ENCODE measurements at regions of chr11 and their contacts with region 1.

Region 1: GRCh38 chr11:101860696-101861427 is 53.9 kb upstream of the CEP126 start:
- DNase-seq: peak in 19 of 35 experiments; percentile 0 to 44 (median 3)
- ATAC-seq: peak in 2 of 4 experiments; percentile 51 to 55
- H3K4me3 ChIP-seq: no peak overlapping the region
- H3K4me3 Mint-ChIP-seq: no peak overlapping the region
- H3K27ac ChIP-seq: no peak overlapping the region
- H3K27ac Mint-ChIP-seq: no peak overlapping the region
- H3K4me1 ChIP-seq: no peaks in the 10 kb centered on the region
- H3K4me1 Mint-ChIP-seq: no peaks in the 10 kb centered on the region
- H3K27me3 ChIP-seq: peaks cover 0 to 3% of the 10 kb centered on the region in 2 experiments
- H3K27me3 Mint-ChIP-seq: peaks cover 15 to 17% of the 10 kb centered on the region in 2 donors

Region 2: DNA sequence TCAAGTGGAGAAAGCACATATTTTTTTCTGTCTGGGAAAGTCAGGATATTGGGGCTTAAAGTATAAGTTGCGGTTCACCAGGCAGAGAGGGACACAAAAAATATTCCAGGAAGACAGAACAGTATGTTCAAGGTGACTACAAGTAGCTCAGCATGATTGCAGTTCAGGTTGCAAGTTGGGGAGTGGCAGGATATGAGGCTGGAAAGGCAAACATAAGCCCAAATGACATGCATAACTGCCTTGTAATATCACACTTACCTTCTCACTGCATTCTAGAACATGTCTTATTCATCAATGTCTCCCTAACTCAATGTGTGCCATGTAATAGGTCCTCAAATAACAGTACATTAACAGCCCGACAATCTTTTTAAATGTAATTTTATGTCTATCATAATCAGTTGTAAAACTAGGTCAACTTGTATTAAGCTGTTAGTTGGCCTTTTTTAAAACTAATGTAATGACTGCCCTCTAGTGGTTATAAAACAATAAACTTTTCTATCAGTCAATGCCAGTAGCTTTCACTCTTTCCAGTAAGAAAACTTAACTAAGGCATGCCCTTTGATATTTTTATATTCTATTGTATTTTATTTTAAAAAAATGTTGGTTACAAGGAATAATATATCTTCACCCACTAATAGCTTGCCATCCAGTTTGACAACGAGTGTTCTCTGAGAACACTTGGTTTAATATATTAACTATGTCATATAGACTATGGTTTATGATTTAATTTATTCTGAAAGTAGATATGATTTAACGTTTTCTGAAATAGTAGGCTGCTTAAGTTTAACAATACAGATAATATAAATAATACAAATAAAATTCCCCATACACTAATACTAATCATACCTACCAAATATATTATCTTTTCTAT is 146.9 kb after region 1 on chr11:
- CTCF ChIA-PET with region 1: interaction called, 66 to 92 read pairs
- POLR2A ChIA-PET with region 1: interaction called in 1 of 2 experiments, 3 read pairs
- DNase-seq: peak in 1 of 35 experiments; percentile 42
- ATAC-seq: no peak
- H3K4me3 ChIP-seq: no peak overlapping the region
- H3K4me3 Mint-ChIP-seq: no peak overlapping the region
- H3K27ac ChIP-seq: no peak overlapping the region
- H3K27ac Mint-ChIP-seq: no peak overlapping the region
- H3K4me1 ChIP-seq: no peaks in the 10 kb centered on the region
- H3K4me1 Mint-ChIP-seq: peaks cover 3 to 6% (median 4%) of the 10 kb centered on the region in 3 donors
- H3K27me3 ChIP-seq: peaks cover 0 to 10% of the 10 kb centered on the region in 2 experiments
- H3K27me3 Mint-ChIP-seq: peaks cover 10 to 15% of the 10 kb centered on the region in 2 donors

Region 3: GRCh38 chr11:102047305-102047924 is 186.6 kb after region 1 on chr11 and contains the start of gene CFAP300:
- CTCF ChIA-PET with region 1: no interaction called
- POLR2A ChIA-PET with region 1: no interaction called
- DNase-seq: peak in 25 of 35 experiments; percentile 1 to 27 (median 7)
- ATAC-seq: peak; percentile 37 to 53 (median 50)
- H3K4me3 ChIP-seq: peak within 1 kb of the TSS; percentile 13 to 54
- H3K4me3 Mint-ChIP-seq: peak within 1 kb of the TSS; percentile 49 to 69 (median 54)
- H3K27ac ChIP-seq: no peak within 1 kb of the TSS
- H3K27ac Mint-ChIP-seq: no peak within 1 kb of the TSS
- H3K4me1 ChIP-seq: peaks cover 0 to 7% of the 10 kb centered on the region in 2 experiments
- H3K4me1 Mint-ChIP-seq: peaks cover 6 to 9% (median 8%) of the 10 kb centered on the region in 3 donors
- H3K27me3 ChIP-seq: peaks cover 18 to 19% of the 10 kb centered on the region in 2 experiments
- H3K27me3 Mint-ChIP-seq: peaks cover 41 to 42% of the 10 kb centered on the region in 2 donors
- total RNA-seq, gene CFAP300: not detected

Region 4: DNA sequence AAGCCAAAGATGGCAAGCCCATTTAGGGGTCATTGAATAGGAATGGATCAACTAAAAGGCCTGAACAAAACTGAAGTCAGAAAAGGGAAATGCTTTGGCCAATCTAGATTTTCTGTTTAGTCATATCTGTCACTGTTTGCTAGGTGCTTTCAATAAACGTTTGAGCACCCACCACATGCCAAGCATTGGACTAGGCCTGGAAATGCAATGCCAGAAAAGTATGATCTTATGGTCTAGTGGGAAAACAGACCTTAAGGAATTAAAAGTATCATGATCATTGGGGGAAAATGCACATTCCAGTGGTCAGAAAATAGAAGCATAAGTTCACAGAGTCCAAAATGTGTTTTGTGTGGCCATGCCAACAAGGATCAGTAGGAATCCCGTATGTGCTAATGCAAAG is 379.6 kb after region 1 on chr11:
- CTCF ChIA-PET with region 1: no interaction called
- POLR2A ChIA-PET with region 1: no interaction called
- DNase-seq: no peak
- ATAC-seq: no peak
- H3K4me3 ChIP-seq: no peak overlapping the region
- H3K4me3 Mint-ChIP-seq: no peak overlapping the region
- H3K27ac ChIP-seq: no peak overlapping the region
- H3K27ac Mint-ChIP-seq: no peak overlapping the region
- H3K4me1 ChIP-seq: no peaks in the 10 kb centered on the region
- H3K4me1 Mint-ChIP-seq: no peaks in the 10 kb centered on the region
- H3K27me3 ChIP-seq: peaks cover 2 to 10% of the 10 kb centered on the region in 2 experiments
- H3K27me3 Mint-ChIP-seq: peaks cover 22 to 28% of the 10 kb centered on the region in 2 donors

Region 5: DNA sequence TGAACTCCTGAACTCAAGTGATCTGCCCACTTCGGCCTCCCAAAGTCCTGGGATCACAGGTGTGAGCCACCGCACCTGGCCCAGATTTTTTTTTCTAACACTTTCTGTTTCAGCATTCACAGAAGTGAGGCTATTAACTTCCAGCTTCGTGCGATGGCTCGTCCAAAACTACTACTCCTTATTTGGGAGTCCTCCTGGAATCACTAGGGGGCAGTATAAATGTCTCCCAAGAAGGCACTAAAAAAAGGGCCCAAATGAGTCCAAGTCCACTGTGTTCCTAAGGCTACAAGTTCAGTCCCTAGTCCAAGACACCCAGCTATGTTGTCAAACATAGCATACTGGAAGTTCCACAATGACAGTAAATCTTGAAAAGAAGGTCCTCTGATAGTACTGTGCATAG is 393.2 kb after region 1 on chr11:
- CTCF ChIA-PET with region 1: no interaction called
- POLR2A ChIA-PET with region 1: no interaction called
- DNase-seq: peak in 1 of 35 experiments; percentile 16
- ATAC-seq: no peak
- H3K4me3 ChIP-seq: no peak overlapping the region
- H3K4me3 Mint-ChIP-seq: no peak overlapping the region
- H3K27ac ChIP-seq: no peak overlapping the region
- H3K27ac Mint-ChIP-seq: no peak overlapping the region
- H3K4me1 ChIP-seq: no peaks in the 10 kb centered on the region
- H3K4me1 Mint-ChIP-seq: no peaks in the 10 kb centered on the region
- H3K27me3 ChIP-seq: no peaks in the 10 kb centered on the region
- H3K27me3 Mint-ChIP-seq: no peaks in the 10 kb centered on the region

Region 6: GRCh38 chr11:102495161-102496042 is 634.5 kb after region 1 on chr11:
- CTCF ChIA-PET with region 1: no interaction called
- POLR2A ChIA-PET with region 1: interaction called in 1 of 2 experiments, 25 read pairs
- DNase-seq: peak in 30 of 35 experiments; percentile 4 to 91 (median 30)
- ATAC-seq: peak; percentile 69 to 86 (median 78)
- H3K4me3 ChIP-seq: no peak overlapping the region
- H3K4me3 Mint-ChIP-seq: no peak overlapping the region
- H3K27ac ChIP-seq: no peak overlapping the region
- H3K27ac Mint-ChIP-seq: no peak overlapping the region
- H3K4me1 ChIP-seq: no peaks in the 10 kb centered on the region
- H3K4me1 Mint-ChIP-seq: peaks cover 7 to 11% (median 8%) of the 10 kb centered on the region in 3 donors
- H3K27me3 ChIP-seq: peaks cover 0 to 9% of the 10 kb centered on the region in 2 experiments
- H3K27me3 Mint-ChIP-seq: peaks cover 5 to 6% of the 10 kb centered on the region in 2 donors